WTC11 (cell line): ENCODE measurements at regions of chr19 and their contacts with region 1.

Region 1: GRCh38 chr19:12647490-12648071 is 19.0 kb downstream of the MAN2B1 start:
- DNase-seq: peak; percentile 95
- ATAC-seq: peak; percentile 92
- H3K4me3 Mint-ChIP-seq: peak overlapping the region; percentile 76
- H3K27ac Mint-ChIP-seq: peak overlapping the region; percentile 95
- H3K4me1 Mint-ChIP-seq: peaks cover 11% of the 10 kb centered on the region
- H3K27me3 Mint-ChIP-seq: peaks cover 11% of the 10 kb centered on the region
- CTCF ChIP-seq: no peak

Region 2: GRCh38 chr19:12374026-12374425 is 273.6 kb before region 1 on chr19:
- CTCF ChIA-PET with region 1: no interaction called
- POLR2A ChIA-PET with region 1: no interaction called
- DNase-seq: no peak
- ATAC-seq: no peak
- H3K4me3 Mint-ChIP-seq: no peak overlapping the region
- H3K27ac Mint-ChIP-seq: no peak overlapping the region
- H3K4me1 Mint-ChIP-seq: no peaks in the 10 kb centered on the region
- H3K27me3 Mint-ChIP-seq: peaks cover 2% of the 10 kb centered on the region; the same call in 1 of the 2 replicates
- CTCF ChIP-seq: no peak

Region 3: DNA sequence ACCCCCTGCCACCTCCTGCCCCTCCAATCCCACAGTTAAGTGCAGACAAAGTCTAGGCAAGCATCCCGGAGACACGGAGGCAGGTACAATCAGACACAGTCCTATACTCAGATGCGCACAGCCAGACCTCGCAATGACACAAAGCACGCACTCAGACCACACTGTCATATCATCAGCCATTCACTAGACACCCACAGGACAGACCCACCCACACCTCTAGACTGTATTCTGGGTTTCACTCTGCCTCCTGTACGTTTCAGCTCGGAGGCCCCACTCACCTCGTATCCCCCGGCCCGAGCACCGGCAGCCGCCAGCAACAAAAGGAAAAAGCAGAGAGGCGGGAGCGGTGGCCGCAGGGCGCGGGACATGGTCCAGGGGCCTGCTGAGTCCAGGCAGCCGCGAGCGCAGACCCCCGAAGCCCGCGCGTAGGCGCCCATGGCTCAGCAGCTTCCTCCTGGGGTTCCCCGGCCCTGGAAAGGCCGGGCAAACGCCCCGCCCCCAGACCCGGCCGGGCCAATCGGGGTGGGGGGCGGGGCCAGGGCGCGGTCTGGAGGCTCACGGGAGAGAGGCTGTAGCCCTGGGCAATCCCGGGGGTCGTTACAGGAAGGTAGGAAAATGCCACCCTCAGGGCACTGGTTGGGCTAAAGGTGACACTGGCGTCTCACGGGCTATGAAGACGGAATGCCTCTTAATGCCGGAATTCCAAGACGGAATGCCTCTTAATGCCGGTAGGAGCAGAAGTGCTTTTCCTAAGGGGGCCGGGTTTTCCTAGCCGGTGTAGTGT is 18.9 kb after region 1 on chr19 and contains the starts of genes MAN2B1 and WDR83:
- CTCF ChIA-PET with region 1: interaction called, 23 read pairs
- POLR2A ChIA-PET with region 1: interaction called, 7 read pairs
- DNase-seq: peak; percentile 84
- ATAC-seq: peak; percentile 72
- H3K4me3 Mint-ChIP-seq: peak within 1 kb of the TSS; percentile 98
- H3K27ac Mint-ChIP-seq: peak within 1 kb of the TSS; percentile 80
- H3K4me1 Mint-ChIP-seq: peaks cover 31% of the 10 kb centered on the region
- H3K27me3 Mint-ChIP-seq: no peaks in the 10 kb centered on the region
- CTCF ChIP-seq: no peak
- total RNA-seq, gene MAN2B1: 69.2 to 73.4 TPM (median 72.0 TPM) in 3 replicates
- total RNA-seq, gene WDR83: 21.8 to 26.3 TPM (median 23.7 TPM) in 3 replicates